Endothelial cell of umbilical vein (primary cell): ENCODE measurements at regions of chr11 and their contacts with region 1.

Region 1: GRCh38 chr11:1694064-1694845 is 2.7 kb upstream of the KRTAP5-6 start:
- DNase-seq: peak; percentile 56
- H3K4me3 ChIP-seq: no peak overlapping the region
- H3K27ac ChIP-seq: no peak overlapping the region
- H3K4me1 ChIP-seq: peaks cover 16% of the 10 kb centered on the region
- H3K27me3 ChIP-seq: no peaks in the 10 kb centered on the region
- CTCF ChIP-seq: peak; percentile 94 to 98
- POLR2A ChIP-seq: no peak

Region 2: DNA sequence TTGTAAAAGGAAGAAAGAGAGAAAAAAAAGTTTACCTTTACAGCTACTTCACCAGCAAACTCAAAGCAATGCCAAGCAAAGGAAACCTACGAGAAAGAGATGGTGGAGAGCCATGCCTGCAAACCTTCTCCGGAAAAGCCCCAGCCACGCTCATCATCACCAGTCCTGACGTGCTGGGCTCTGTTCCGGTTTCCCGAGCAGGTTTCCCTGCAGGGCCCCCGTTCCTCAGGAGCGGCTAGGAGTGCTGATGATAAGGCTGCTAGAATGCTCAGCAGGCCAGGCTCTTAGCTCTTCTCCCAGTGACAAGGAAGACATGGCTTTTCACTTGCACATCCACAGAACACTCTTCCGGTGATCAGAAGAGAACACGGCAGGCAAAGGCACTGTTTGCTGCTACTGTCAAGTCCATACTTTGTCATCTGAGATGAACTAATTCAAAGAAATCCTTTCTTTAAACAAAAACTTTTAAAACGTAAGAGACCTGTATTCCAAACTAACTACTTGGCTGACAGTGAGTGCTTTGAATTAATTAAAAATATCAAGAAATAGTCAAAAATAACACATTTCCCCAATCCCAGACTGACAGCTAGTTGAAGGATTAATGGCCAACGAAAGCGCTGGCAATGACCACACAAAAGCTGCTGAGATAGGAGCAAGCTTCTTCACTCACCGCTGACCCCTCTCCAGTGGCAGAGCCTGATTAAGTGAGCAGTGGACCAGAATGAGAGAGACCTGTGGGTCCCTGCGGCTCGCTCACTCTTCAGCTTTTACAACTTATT is 158.0 kb before region 1 on chr11:
- CTCF ChIA-PET with region 1: no interaction called
- POLR2A ChIA-PET with region 1: no interaction called
- dilution Hi-C with region 1: no loop called
- intact Hi-C with region 1: no loop called
- DNase-seq: no peak
- H3K4me3 ChIP-seq: no peak overlapping the region
- H3K27ac ChIP-seq: no peak overlapping the region
- H3K4me1 ChIP-seq: peaks cover 7% of the 10 kb centered on the region
- H3K27me3 ChIP-seq: peaks cover 7 to 8% of the 10 kb centered on the region in 2 experiments
- CTCF ChIP-seq: no peak
- POLR2A ChIP-seq: no peak

Region 3: DNA sequence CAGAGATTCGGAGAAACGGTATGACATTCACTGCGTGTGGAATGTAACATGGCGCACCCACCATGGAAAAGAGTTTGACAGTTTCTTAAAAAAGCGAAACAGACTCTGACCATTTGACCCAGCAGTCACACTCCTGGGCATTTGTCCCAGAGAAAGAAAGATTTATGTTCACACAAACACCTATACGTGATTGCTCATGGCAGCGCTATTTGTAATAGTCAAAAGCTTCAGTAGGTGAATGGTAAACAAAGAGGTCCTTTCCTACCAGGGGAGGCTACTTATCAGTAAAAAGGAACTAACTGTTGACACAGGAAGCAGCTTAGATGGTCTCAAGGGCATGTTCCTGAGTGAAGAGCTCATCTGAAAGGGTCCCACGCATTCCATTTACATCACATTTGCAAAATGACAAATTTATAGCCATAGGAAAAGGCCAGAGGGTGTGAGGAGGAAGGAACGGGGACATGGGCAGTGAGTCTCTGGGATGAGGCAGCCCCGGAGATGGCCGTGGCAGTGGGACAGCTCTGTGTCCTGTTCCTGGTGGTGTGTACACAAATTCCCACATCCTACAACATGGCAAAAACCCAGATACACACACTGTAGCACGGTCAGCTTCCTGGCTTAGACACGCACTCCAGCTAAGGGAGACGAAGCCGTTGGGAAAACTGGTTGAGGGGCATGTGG is 11.9 kb before region 1 on chr11:
- CTCF ChIA-PET with region 1: interaction called, 10 read pairs
- POLR2A ChIA-PET with region 1: no interaction called
- dilution Hi-C with region 1: no loop called
- intact Hi-C with region 1: no loop called
- DNase-seq: no peak
- H3K4me3 ChIP-seq: no peak overlapping the region
- H3K27ac ChIP-seq: no peak overlapping the region
- H3K4me1 ChIP-seq: no peaks in the 10 kb centered on the region
- H3K27me3 ChIP-seq: no peaks in the 10 kb centered on the region
- CTCF ChIP-seq: no peak
- POLR2A ChIP-seq: no peak

Region 4: GRCh38 chr11:1827095-1827813 is 133.0 kb after region 1 on chr11:
- CTCF ChIA-PET with region 1: interaction called, 623 read pairs
- POLR2A ChIA-PET with region 1: interaction called, 4 read pairs
- dilution Hi-C with region 1: no loop called
- intact Hi-C with region 1: loop called (anchors 1 kb)
- DNase-seq: peak; percentile 41
- H3K4me3 ChIP-seq: no peak overlapping the region
- H3K27ac ChIP-seq: no peak overlapping the region
- H3K4me1 ChIP-seq: peaks cover 3% of the 10 kb centered on the region
- H3K27me3 ChIP-seq: no peaks in the 10 kb centered on the region
- CTCF ChIP-seq: no peak
- POLR2A ChIP-seq: no peak

Region 5: GRCh38 chr11:1837171-1838076 is 143.2 kb after region 1 on chr11:
- CTCF ChIA-PET with region 1: interaction called, 623 read pairs
- POLR2A ChIA-PET with region 1: interaction called, 4 read pairs
- dilution Hi-C with region 1: no loop called
- intact Hi-C with region 1: loop called (anchors 1 kb)
- DNase-seq: peak; percentile 19
- H3K4me3 ChIP-seq: no peak overlapping the region
- H3K27ac ChIP-seq: no peak overlapping the region
- H3K4me1 ChIP-seq: no peaks in the 10 kb centered on the region
- H3K27me3 ChIP-seq: no peaks in the 10 kb centered on the region
- CTCF ChIP-seq: peak; percentile 67 to 92
- POLR2A ChIP-seq: no peak

Region 6: DNA sequence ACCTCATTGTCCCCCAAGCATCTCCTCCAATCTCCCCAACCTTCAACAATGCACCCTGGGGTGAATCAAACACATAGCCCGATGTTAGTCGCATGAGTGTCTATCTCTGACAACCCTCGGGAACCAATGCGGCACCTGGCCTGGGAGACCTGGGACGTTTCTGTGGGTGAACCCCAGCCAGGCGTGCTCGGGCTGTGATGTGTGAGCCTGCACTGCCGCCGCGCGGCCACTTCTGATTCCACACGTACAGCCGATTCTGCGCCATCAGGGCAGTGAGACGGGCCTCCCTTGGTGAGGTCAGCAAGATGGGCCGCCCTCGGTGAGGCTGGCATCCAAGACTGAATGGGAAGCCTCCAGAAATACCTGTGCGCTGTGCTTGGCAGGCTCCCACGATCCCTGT is 308.6 kb after region 1 on chr11:
- CTCF ChIA-PET with region 1: interaction called, 107 read pairs
- POLR2A ChIA-PET with region 1: no interaction called
- dilution Hi-C with region 1: no loop called
- intact Hi-C with region 1: no loop called
- DNase-seq: no peak
- H3K4me3 ChIP-seq: no peak overlapping the region
- H3K27ac ChIP-seq: no peak overlapping the region
- H3K4me1 ChIP-seq: no peaks in the 10 kb centered on the region
- H3K27me3 ChIP-seq: no peaks in the 10 kb centered on the region
- CTCF ChIP-seq: no peak
- POLR2A ChIP-seq: no peak